K562 (cell line): ENCODE measurements at regions of chr6 and their contacts with region 1.

Region 1: DNA sequence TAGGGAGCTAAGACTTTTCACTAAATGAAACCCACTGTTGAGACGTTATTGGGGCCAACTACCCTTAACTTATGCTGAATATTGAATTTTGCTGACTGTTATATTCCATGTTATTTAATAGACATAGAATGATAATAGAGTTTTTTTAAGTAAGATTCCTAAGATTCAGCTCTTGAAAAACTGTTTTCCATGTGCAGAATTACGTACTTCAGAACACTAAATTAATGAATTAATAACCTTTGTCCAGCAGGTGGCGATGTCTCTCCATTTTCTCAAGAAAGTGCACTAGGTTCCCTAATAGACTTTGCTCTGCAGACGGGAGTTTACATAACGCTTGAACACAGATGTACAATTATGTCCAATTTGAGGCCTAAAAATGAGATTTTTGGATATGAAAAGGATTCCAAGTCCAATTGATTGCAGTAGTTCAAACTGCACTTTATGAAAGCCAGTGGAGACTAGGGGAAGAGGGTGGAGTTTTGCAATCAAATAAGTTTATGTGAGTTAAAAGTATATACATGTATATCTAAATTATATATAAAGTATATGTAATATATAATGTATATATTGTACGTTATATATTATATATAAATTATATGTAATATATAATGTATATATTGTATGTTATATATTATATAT is 282.1 kb downstream of the UST start:
- DNase-seq: peak; percentile 65 to 90 (median 74)
- ATAC-seq: peak; percentile 88
- H3K4me3 ChIP-seq: no peak overlapping the region
- H3K27ac ChIP-seq: no peak overlapping the region
- H3K4me1 ChIP-seq: 0 out of 5 replicates have a peak, but pooled peaks cover 0 to 3% of the 10 kb centered on the region in 2 experiments
- H3K27me3 ChIP-seq: peaks cover 14 to 18% of the 10 kb centered on the region in 2 experiments; a peak in 4 of 5 replicates
- CTCF ChIP-seq: peak; percentile 62 to 87 (median 69); a peak in 5 of 6 replicates
- EP300 ChIP-seq: no peak
- POLR2A ChIP-seq: no peak
- RAD21 ChIP-seq: peak; percentile 93 to 95

Region 2: GRCh38 chr6:148559848-148560433 is 468.9 kb before region 1 on chr6:
- CTCF ChIA-PET with region 1: no interaction called
- POLR2A ChIA-PET with region 1: no interaction called
- in situ Hi-C with region 1: no loop called
- intact Hi-C with region 1: loop called (anchors 5 kb)
- DNase-seq: peak; percentile 73 to 89 (median 82)
- ATAC-seq: peak; percentile 98
- H3K4me3 ChIP-seq: no peak overlapping the region
- H3K27ac ChIP-seq: no peak overlapping the region
- H3K4me1 ChIP-seq: peaks cover 0 to 6% of the 10 kb centered on the region in 2 experiments; a peak in 3 of 5 replicates
- H3K27me3 ChIP-seq: peaks cover 25 to 65% of the 10 kb centered on the region in 2 experiments
- CTCF ChIP-seq: peak; percentile 96 to 98 (median 98)
- EP300 ChIP-seq: no peak
- POLR2A ChIP-seq: no peak
- RAD21 ChIP-seq: peak; percentile 80 to 90

Region 3: GRCh38 chr6:148578245-148578732 is 450.6 kb before region 1 on chr6:
- CTCF ChIA-PET with region 1: no interaction called
- POLR2A ChIA-PET with region 1: no interaction called
- in situ Hi-C with region 1: no loop called
- intact Hi-C with region 1: loop called (anchors 1 kb)
- DNase-seq: peak; percentile 19 to 78 (median 50)
- ATAC-seq: peak; percentile 100
- H3K4me3 ChIP-seq: no peak overlapping the region
- H3K27ac ChIP-seq: no peak overlapping the region
- H3K4me1 ChIP-seq: no peaks in the 10 kb centered on the region
- H3K27me3 ChIP-seq: peaks cover 2 to 9% of the 10 kb centered on the region in 2 experiments; a peak in 4 of 5 replicates
- CTCF ChIP-seq: peak; percentile 96 to 100 (median 100)
- EP300 ChIP-seq: no peak
- POLR2A ChIP-seq: no peak
- RAD21 ChIP-seq: peak; percentile 81 to 88

Region 4: DNA sequence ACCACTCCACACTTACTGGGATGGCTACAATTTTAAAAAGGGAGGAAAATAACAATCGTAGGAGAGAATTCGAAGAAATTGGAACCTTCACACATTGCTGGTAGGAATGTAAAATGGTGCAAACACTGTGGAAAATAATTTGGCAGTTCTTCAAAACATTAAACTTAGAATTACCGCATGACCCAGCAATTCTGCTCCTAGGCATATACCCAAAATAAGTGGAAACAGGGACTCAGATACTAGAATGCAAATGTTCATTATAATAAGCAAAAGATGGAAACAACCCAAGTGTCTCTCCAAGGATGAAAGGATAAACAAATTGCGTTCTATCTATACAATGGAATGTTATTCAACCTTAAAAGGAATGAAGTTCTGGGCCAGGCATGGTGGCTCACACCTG is 43.1 kb after region 1 on chr6:
- CTCF ChIA-PET with region 1: no interaction called
- POLR2A ChIA-PET with region 1: no interaction called
- in situ Hi-C with region 1: no loop called
- intact Hi-C with region 1: no loop called
- DNase-seq: no peak
- ATAC-seq: no peak
- H3K4me3 ChIP-seq: no peak overlapping the region
- H3K27ac ChIP-seq: no peak overlapping the region
- H3K4me1 ChIP-seq: no peaks in the 10 kb centered on the region; a peak in 1 of 5 replicates
- H3K27me3 ChIP-seq: peaks cover 13 to 23% of the 10 kb centered on the region in 2 experiments; a peak in 4 of 5 replicates
- CTCF ChIP-seq: no peak
- EP300 ChIP-seq: no peak
- POLR2A ChIP-seq: no peak
- RAD21 ChIP-seq: no peak

Region 5: DNA sequence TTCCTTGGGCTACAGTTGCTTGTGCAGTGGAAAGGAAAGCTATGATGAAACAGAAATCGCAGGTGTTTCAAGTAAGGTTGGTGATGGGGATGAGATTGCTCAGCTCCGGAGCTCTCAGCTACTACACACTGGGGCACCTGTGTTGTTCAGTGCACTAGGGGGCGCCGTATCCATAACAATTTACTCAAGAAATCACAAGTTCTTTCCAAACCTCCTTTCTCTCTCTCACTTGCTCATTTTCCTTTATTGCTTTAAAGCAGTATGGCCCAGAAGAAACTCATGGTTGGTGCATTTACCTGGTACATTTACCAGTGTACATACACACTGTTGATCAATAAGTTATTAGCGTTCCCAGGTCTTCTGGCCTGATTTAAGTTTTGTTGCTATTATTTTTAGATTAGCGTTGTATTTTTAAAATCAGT is 53.4 kb after region 1 on chr6:
- CTCF ChIA-PET with region 1: no interaction called
- POLR2A ChIA-PET with region 1: no interaction called
- in situ Hi-C with region 1: no loop called
- intact Hi-C with region 1: loop called (anchors 2 kb)
- DNase-seq: peak; percentile 61 to 87 (median 70)
- ATAC-seq: peak; percentile 98
- H3K4me3 ChIP-seq: no peak overlapping the region
- H3K27ac ChIP-seq: no peak overlapping the region
- H3K4me1 ChIP-seq: no peaks in the 10 kb centered on the region
- H3K27me3 ChIP-seq: peaks cover 6 to 23% of the 10 kb centered on the region in 2 experiments
- CTCF ChIP-seq: peak; percentile 77 to 93 (median 87)
- EP300 ChIP-seq: no peak
- POLR2A ChIP-seq: no peak
- RAD21 ChIP-seq: peak; percentile 98

Region 6: DNA sequence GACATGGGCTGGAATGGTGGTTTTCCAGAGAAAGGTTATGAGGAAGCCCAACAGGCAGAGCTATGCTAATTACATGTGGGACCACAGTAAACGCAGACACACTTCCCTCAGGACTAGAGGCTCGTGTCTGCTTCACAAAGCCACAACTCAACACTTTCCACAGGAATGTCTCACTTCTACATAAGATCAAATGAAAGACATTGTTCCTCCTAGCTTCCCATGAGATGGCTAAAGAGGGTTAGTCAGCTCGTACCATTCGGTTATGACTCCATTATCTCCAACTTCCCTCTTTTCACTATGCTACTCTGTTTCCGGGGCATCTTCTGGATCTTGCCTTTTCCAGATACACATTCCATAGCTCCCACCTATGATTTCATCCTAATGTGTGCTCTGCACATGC is 485.0 kb after region 1 on chr6:
- CTCF ChIA-PET with region 1: interaction called, 3 read pairs
- POLR2A ChIA-PET with region 1: no interaction called
- in situ Hi-C with region 1: no loop called
- intact Hi-C with region 1: loop called (anchors 5 kb)
- DNase-seq: no peak
- ATAC-seq: no peak
- H3K4me3 ChIP-seq: no peak overlapping the region
- H3K27ac ChIP-seq: no peak overlapping the region
- H3K4me1 ChIP-seq: no peaks in the 10 kb centered on the region
- H3K27me3 ChIP-seq: no peaks in the 10 kb centered on the region
- CTCF ChIP-seq: no peak
- EP300 ChIP-seq: no peak
- POLR2A ChIP-seq: no peak
- RAD21 ChIP-seq: no peak

Region 7: DNA sequence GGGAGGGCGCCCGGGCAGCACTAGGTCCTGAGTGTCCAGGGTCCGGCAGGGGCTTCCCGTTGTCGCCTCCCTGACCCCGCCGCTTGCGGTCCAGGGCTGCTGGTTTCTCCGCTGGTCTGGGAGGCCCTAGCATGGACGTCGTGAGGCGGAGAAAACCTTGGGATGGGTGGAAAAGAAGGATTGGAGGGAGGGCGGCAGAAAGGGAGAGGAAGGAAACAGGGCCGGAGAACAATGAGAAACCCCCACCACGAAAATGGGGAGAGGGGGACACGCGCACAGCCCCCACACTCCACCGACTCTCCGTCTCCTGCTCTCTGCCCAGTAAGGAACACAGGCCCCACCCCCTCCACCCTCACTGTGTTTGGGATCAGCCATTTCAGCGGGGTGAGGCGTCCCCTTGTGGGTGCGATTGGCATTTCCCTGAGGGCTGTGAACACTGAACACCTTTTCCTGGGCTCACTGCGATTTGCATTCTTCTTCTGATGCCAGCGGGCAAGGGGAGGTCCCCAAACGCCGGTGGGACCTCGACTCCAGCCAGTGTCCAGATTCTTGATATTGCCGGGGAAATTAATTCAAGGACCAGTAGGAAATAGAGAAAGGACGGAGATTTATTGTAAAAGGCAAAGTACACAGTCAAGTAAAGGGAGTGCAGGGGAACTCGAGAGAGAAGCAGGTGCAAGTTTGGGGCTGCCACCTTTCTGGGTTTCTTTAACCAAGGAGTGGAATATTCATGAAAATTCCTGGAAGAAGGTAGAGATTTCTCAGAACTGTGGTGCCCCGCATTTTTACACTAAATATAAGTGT is 897.3 kb after region 1 on chr6:
- CTCF ChIA-PET with region 1: interaction called, 8 read pairs
- POLR2A ChIA-PET with region 1: no interaction called
- in situ Hi-C with region 1: loop called (anchors 25 kb)
- intact Hi-C with region 1: loop called (anchors 5 kb)
- DNase-seq: peak; percentile 75 to 91 (median 82)
- ATAC-seq: peak; percentile 97
- H3K4me3 ChIP-seq: peak overlapping the region; percentile 30
- H3K27ac ChIP-seq: no peak overlapping the region
- H3K4me1 ChIP-seq: peaks cover 0 to 26% of the 10 kb centered on the region in 2 experiments; a peak in 3 of 5 replicates
- H3K27me3 ChIP-seq: peaks cover 21 to 52% of the 10 kb centered on the region in 2 experiments
- CTCF ChIP-seq: peak; percentile 93 to 96 (median 95)
- EP300 ChIP-seq: 0 out of 2 replicates have a peak, but pooled peaks have one; percentile 20
- POLR2A ChIP-seq: no peak
- RAD21 ChIP-seq: peak; percentile 94 to 98